CD8-positive, alpha-beta T cell (primary cell): ENCODE measurements at regions of chr6 and their contacts with region 1.

Region 1: DNA sequence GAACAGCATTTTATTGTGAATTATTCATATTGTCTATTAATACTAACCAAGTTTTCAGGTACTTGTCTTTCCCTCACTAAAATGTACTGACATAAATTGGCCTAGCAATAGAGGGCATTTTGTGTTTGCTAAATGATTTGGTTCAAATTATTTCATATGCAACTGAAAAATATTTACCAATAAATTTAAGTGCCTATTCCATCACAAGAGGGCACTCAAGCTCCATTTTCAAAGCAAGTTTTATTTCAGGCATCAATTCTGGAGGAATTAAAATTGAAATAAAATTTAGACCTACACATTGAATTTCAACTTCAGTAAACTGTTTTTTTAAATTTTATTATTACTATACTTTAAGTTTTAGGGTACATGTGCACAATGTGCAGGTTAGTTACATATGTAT is 114.3 kb upstream of the SYNCRIP start:
- DNase-seq: peak in 1 of 9 experiments; percentile 4
- ATAC-seq: no peak
- H3K4me3 ChIP-seq: no peak overlapping the region
- H3K4me3 Mint-ChIP-seq: no peak overlapping the region
- H3K27ac ChIP-seq: no peak overlapping the region
- H3K27ac Mint-ChIP-seq: no peak overlapping the region
- H3K4me1 ChIP-seq: no peaks in the 10 kb centered on the region
- H3K4me1 Mint-ChIP-seq: no peaks in the 10 kb centered on the region
- H3K27me3 ChIP-seq: no peaks in the 10 kb centered on the region
- H3K27me3 Mint-ChIP-seq: no peaks in the 10 kb centered on the region
- CTCF ChIP-seq: no peak

Region 2: GRCh38 chr6:85135376-85136094 is 621.4 kb before region 1 on chr6:
- CTCF ChIA-PET with region 1: no interaction called
- POLR2A ChIA-PET with region 1: no interaction called
- intact Hi-C with region 1: no loop called
- DNase-seq: no peak
- ATAC-seq: no peak
- H3K4me3 ChIP-seq: no peak overlapping the region
- H3K4me3 Mint-ChIP-seq: no peak overlapping the region
- H3K27ac ChIP-seq: no peak overlapping the region
- H3K27ac Mint-ChIP-seq: no peak overlapping the region
- H3K4me1 ChIP-seq: no peaks in the 10 kb centered on the region
- H3K4me1 Mint-ChIP-seq: no peaks in the 10 kb centered on the region
- H3K27me3 ChIP-seq: no peaks in the 10 kb centered on the region
- H3K27me3 Mint-ChIP-seq: peaks cover 2% of the 10 kb centered on the region
- CTCF ChIP-seq: no peak

Region 3: GRCh38 chr6:86152546-86152945 is 395.6 kb after region 1 on chr6:
- CTCF ChIA-PET with region 1: no interaction called
- POLR2A ChIA-PET with region 1: no interaction called
- intact Hi-C with region 1: no loop called
- DNase-seq: no peak
- ATAC-seq: no peak
- H3K4me3 ChIP-seq: no peak overlapping the region
- H3K4me3 Mint-ChIP-seq: no peak overlapping the region
- H3K27ac ChIP-seq: no peak overlapping the region
- H3K27ac Mint-ChIP-seq: no peak overlapping the region
- H3K4me1 ChIP-seq: no peaks in the 10 kb centered on the region
- H3K4me1 Mint-ChIP-seq: no peaks in the 10 kb centered on the region
- H3K27me3 ChIP-seq: peaks cover 0 to 2% of the 10 kb centered on the region in 2 experiments
- H3K27me3 Mint-ChIP-seq: no peaks in the 10 kb centered on the region
- CTCF ChIP-seq: no peak

Region 4: DNA sequence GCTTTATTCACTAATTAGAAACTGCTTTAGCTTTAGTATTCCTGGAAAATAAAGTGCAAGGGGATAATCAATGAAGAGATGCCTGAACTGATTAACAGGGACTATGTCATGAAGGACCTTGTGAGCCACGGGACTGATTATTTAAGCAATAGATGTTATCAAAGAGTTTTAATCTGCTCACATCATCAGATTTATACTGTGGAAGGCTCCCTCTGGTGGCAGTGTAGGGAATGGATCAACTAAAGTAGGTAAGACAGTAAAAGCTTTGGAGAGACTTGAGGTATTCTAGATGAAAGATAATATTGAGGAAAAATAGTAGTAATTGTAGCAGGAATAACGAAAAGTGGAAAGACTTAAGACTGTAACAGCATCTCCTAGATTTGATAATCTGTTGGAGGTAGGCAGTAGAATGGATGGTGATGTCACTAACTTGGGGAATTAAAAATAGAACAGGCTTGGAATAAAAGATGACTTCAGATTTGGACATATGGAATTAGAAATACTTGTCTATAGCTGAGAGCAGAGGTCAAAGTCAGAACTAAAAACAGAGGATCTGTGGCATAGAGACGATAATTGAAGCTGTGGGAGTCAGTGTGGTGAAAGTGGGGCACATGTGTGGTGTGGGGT is 1100.1 kb after region 1 on chr6:
- CTCF ChIA-PET with region 1: no interaction called
- POLR2A ChIA-PET with region 1: no interaction called
- intact Hi-C with region 1: loop called in 1 of 2 experiments (anchors 5 kb)
- DNase-seq: peak in 1 of 9 experiments; percentile 9
- ATAC-seq: no peak
- H3K4me3 ChIP-seq: no peak overlapping the region
- H3K4me3 Mint-ChIP-seq: no peak overlapping the region
- H3K27ac ChIP-seq: no peak overlapping the region
- H3K27ac Mint-ChIP-seq: no peak overlapping the region
- H3K4me1 ChIP-seq: no peaks in the 10 kb centered on the region
- H3K4me1 Mint-ChIP-seq: no peaks in the 10 kb centered on the region
- H3K27me3 ChIP-seq: no peaks in the 10 kb centered on the region
- H3K27me3 Mint-ChIP-seq: no peaks in the 10 kb centered on the region
- CTCF ChIP-seq: peak; percentile 25